PC-3 (cell line): ENCODE measurements at regions of chr11 and their contacts with region 1.

Region 1: GRCh38 chr11:76588455-76589325 is 81.9 kb downstream of the LRRC32 start:
- DNase-seq: no peak
- ATAC-seq: no peak
- H3K4me3 ChIP-seq: no peak overlapping the region
- H3K27ac ChIP-seq: no peak overlapping the region
- H3K4me1 ChIP-seq: peaks cover 10% of the 10 kb centered on the region; the same call in 1 of the 2 replicates
- H3K27me3 ChIP-seq: no peaks in the 10 kb centered on the region
- CTCF ChIP-seq: no peak

Region 2: DNA sequence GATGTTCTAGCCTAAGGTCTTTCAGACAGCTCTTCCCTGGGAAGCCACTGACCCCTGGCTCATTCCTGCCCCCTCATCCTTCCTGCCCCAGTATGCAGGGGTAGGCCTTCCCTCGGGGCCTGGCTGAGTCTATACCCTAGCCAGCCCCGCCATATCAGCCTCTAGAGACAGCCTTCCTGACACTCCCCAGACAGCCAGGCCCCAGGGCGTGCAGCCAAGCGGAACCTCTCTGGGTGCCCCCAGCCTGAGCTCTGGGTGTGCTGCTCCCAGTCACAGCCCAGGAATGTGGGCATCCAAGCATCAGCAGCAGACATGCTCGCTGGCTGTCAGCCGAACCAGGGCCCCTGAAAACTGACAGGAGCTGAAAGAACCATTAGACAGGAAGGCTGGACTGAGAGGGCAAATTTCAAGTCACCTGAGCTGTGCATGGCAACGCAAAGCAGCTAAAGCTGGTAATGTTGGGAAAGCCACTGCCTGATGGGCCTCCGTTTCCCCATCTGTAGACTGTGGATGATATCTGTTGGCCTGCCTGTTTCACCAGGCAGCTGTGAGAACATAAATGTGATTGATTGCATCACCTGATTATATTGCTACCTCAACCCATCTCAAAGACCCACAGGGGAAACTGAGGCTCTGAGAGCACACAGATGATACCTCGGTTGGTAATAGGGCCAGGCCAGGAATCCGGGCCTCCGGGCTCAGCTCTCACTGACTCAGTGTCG is 11.3 kb before region 1 on chr11:
- CTCF ChIA-PET with region 1: interaction called, 10 read pairs
- POLR2A ChIA-PET with region 1: no interaction called
- intact Hi-C with region 1: no loop called
- DNase-seq: peak; percentile 98
- ATAC-seq: peak; percentile 99
- H3K4me3 ChIP-seq: no peak overlapping the region
- H3K27ac ChIP-seq: peak overlapping the region; percentile 54
- H3K4me1 ChIP-seq: peaks cover 16% of the 10 kb centered on the region
- H3K27me3 ChIP-seq: no peaks in the 10 kb centered on the region
- CTCF ChIP-seq: no peak